Calu3 (cell line): ENCODE measurements at regions of chr10 and their contacts with region 1.

Region 1: GRCh38 chr10:23994479-23995046 is 214.4 kb upstream of the KIAA1217 start:
- DNase-seq: peak; percentile 76
- H3K4me3 Mint-ChIP-seq: no peak overlapping the region
- H3K27ac Mint-ChIP-seq: no peak overlapping the region
- H3K4me1 Mint-ChIP-seq: no peaks in the 10 kb centered on the region
- H3K27me3 Mint-ChIP-seq: no peaks in the 10 kb centered on the region
- CTCF ChIP-seq: peak; percentile 73

Region 2: DNA sequence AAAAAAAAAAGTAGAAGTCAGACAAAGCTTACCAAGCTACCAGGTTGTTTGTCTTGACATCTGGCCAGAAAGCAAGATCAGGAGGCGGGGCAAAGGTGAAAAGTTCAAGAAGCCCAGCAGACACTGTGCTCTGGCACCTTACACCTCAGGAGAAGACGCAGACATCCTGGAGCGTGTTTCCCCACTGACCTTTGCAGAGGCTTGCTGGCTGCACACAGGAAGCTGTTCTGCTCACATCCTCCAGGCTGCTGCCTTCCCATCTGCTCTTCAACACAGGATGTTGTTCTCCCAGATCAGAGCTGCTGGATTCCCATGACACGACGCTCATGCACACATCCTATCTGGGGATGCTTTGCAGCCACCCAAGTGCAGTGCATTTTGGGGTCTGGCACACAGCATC is 40.0 kb after region 1 on chr10:
- CTCF ChIA-PET with region 1: no interaction called
- intact Hi-C with region 1: no loop called
- DNase-seq: peak; percentile 8
- H3K4me3 Mint-ChIP-seq: no peak overlapping the region
- H3K27ac Mint-ChIP-seq: no peak overlapping the region
- H3K4me1 Mint-ChIP-seq: peaks cover 8% of the 10 kb centered on the region
- H3K27me3 Mint-ChIP-seq: no peaks in the 10 kb centered on the region
- CTCF ChIP-seq: no peak

Region 3: DNA sequence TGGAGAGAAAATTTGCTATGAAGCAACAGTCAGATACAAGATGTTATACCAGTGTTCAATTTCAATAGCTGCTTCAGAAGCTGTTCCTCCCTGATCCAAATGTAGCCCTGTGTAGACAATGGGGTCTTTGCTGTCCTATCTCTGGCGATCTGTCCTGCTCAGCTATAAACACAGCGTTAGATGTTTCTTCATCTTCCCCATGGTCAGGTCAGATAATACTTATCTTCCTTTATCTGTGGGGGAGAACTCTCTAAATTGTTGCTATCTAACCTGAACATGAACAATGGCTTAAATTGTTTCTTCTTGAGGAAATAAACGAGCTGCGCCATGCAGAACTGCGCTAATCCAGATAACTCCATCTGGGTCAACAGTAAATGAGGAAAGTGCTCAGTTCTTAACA is 198.8 kb after region 1 on chr10:
- CTCF ChIA-PET with region 1: interaction called, 12 read pairs
- intact Hi-C with region 1: loop called (anchors 1 kb)
- DNase-seq: no peak
- H3K4me3 Mint-ChIP-seq: no peak overlapping the region
- H3K27ac Mint-ChIP-seq: no peak overlapping the region
- H3K4me1 Mint-ChIP-seq: no peaks in the 10 kb centered on the region
- H3K27me3 Mint-ChIP-seq: no peaks in the 10 kb centered on the region
- CTCF ChIP-seq: no peak

Region 4: GRCh38 chr10:24201503-24202180 is 207.1 kb after region 1 on chr10:
- CTCF ChIA-PET with region 1: interaction called, 6 read pairs
- intact Hi-C with region 1: loop called (anchors 1 kb)
- DNase-seq: no peak
- H3K4me3 Mint-ChIP-seq: no peak overlapping the region
- H3K27ac Mint-ChIP-seq: no peak overlapping the region
- H3K4me1 Mint-ChIP-seq: no peaks in the 10 kb centered on the region
- H3K27me3 Mint-ChIP-seq: no peaks in the 10 kb centered on the region
- CTCF ChIP-seq: no peak

Region 5: GRCh38 chr10:24360282-24361127 is 365.9 kb after region 1 on chr10:
- CTCF ChIA-PET with region 1: interaction called, 14 read pairs
- intact Hi-C with region 1: loop called (anchors 1 kb)
- DNase-seq: peak; percentile 80
- H3K4me3 Mint-ChIP-seq: no peak overlapping the region
- H3K27ac Mint-ChIP-seq: no peak overlapping the region
- H3K4me1 Mint-ChIP-seq: peaks cover 8% of the 10 kb centered on the region
- H3K27me3 Mint-ChIP-seq: no peaks in the 10 kb centered on the region
- CTCF ChIP-seq: peak; percentile 49

Region 6: GRCh38 chr10:24503461-24504320 is 509.1 kb after region 1 on chr10:
- CTCF ChIA-PET with region 1: no interaction called
- intact Hi-C with region 1: loop called (anchors 5 kb)
- DNase-seq: peak; percentile 62
- H3K4me3 Mint-ChIP-seq: no peak overlapping the region
- H3K27ac Mint-ChIP-seq: no peak overlapping the region
- H3K4me1 Mint-ChIP-seq: no peaks in the 10 kb centered on the region
- H3K27me3 Mint-ChIP-seq: no peaks in the 10 kb centered on the region
- CTCF ChIP-seq: peak; percentile 75

Region 7: GRCh38 chr10:24518981-24519597 is 524.5 kb after region 1 on chr10:
- CTCF ChIA-PET with region 1: interaction called, 4 read pairs
- intact Hi-C with region 1: loop called (anchors 2 kb)
- DNase-seq: peak; percentile 74
- H3K4me3 Mint-ChIP-seq: no peak overlapping the region
- H3K27ac Mint-ChIP-seq: no peak overlapping the region
- H3K4me1 Mint-ChIP-seq: no peaks in the 10 kb centered on the region
- H3K27me3 Mint-ChIP-seq: no peaks in the 10 kb centered on the region
- CTCF ChIP-seq: peak; percentile 56

Region 8: DNA sequence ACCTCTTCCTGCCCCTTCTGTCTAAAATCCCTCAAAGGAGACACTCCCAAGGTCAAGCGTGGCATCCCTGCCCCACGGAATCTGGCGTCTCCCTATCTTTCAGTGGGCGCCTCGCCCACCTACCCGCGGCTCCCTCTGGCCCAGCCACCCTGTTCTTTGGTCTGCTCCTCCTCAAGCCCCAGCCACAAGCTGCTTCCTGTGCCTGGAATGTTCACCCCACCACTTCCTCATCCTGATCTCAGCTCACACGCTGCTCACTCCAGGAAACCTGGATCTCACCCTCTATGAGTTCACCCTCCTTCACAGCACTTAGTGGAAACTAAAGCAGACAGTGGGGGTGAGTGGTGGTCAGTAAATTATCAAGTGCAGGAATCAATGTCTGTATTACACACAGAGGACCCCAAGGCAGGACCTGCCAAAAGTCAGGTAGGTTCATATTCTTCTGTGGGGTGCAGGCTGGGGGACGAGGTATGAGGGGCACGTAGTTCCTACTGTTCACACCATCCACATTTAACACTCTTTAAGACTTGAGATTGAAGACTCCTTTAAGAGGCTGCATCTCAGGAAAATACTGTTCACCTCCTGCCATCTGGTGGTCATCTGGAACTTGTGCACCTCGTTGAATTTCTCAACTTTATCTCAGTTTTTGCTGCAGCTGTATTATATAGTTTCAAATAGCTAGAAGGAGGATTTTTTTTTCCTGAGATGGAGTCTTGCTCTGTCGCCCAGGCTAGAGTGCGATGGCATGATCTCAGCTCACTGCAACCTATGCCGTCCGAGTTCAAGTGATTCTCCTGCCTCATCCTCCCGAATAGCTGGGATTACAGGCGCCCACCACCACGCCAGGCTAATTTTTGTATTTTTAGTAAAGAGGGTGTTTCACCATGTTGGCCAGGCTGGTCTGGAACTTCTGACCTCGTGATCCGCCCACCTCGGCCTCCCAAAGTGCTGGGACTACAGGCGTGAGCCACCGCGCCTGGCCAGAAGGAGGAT is 562.5 kb after region 1 on chr10:
- CTCF ChIA-PET with region 1: interaction called, 5 read pairs
- intact Hi-C with region 1: loop called (anchors 1 kb)
- DNase-seq: peak; percentile 52
- H3K4me3 Mint-ChIP-seq: peak overlapping the region; percentile 5
- H3K27ac Mint-ChIP-seq: peak overlapping the region; percentile 34
- H3K4me1 Mint-ChIP-seq: peaks cover 27% of the 10 kb centered on the region
- H3K27me3 Mint-ChIP-seq: no peaks in the 10 kb centered on the region
- CTCF ChIP-seq: peak; percentile 64